CD4-positive, alpha-beta memory T cell (primary cell): ENCODE measurements at regions of chr7 and their contacts with region 1.

Region 1: DNA sequence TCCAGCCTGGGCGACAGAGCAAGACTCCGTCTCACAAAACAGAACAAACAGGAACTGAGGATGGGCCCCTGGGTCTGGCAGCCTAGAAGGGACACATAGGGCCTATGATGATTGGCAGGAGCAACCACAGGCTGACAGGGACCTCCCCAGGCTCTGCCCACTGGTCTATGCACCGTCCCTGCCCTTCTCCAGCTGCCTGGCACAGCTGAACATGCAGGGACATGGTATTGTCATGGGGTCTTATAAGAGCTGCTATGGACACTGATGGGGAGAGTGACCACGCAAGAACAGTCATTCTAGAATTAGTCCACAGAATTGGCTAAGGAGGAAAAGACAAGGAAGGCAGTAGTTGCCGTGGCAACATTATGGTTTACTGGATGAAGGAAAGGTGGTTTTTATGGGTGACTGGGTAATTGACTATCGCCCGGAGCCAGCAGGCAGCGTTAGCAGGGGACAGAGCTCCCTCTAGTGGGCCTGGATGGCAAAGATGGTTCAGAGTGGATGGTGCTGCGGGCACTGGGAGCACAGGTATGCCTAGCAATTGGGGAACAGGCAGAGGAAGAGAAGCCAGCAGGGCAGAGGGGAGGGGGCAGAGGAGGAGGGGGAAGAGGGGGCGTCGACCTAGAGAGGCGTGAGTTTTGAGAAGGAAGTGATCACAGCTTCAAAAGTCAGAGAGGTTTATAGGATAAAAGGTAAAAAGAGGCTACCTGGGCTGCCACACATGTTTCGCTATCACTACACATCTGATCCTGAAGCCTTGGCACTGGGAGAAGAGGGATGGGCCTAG is 7.8 kb upstream of the TRIM56 start:
- DNase-seq: peak; percentile 75 to 81 (median 78)
- H3K4me3 ChIP-seq: no peak overlapping the region
- H3K4me3 Mint-ChIP-seq: peak overlapping the region in 2 of 8 donors; percentile 8 to 41
- H3K27ac ChIP-seq: no peak overlapping the region
- H3K27ac Mint-ChIP-seq: peak overlapping the region in 1 of 7 donors; percentile 70
- H3K4me1 ChIP-seq: peaks cover 7% of the 10 kb centered on the region
- H3K4me1 Mint-ChIP-seq: peaks cover 0 to 5% (median 4%) of the 10 kb centered on the region in 4 donors
- H3K27me3 ChIP-seq: no peaks in the 10 kb centered on the region
- H3K27me3 Mint-ChIP-seq: peaks cover 5 to 9% of the 10 kb centered on the region in 2 donors

Region 2: DNA sequence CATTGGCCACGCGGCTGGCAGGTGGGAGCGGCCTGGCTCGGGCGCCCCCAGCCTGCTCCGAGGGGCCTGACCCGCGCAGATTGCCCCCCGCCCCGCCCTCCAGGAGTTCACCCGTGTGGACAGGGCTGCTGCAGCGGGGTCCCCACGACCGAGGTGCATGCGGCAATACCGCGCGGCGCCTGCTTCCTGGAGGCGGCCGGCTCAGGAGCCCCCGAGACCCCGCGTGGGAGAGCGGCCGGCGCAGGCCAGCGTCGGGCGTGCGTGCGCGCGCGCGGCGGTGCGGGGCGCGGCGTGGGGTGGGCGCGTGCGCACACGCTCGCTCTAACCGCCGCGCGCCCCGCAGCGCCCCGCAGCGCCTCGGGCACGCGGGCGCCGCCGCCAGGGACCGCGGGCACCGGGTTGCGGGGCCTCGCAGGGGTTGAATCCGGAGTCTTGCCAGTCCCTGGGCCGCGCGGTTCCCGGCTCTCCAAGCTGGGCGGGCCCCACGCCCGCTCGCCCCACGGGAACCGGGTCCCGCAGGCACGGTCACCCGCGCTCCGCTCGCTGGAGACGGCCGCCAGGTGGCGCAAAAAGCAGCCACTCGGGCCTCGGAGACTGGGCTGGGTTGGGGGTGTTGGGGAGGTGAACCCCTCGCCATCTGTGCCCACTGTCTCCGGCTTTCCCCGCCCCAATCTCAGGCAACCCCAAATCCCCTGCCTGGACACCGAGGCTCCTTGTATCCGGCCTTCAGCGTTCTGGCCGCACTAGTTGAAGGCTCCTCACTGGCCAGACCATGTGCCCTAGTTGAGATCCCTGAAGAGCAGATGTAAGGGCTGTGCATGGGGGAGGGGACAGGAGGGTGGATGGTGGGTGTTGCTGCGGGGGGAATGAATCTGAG is 180.5 kb before region 1 on chr7:
- CTCF ChIA-PET with region 1: interaction called, 11 read pairs
- POLR2A ChIA-PET with region 1: no interaction called
- intact Hi-C with region 1: loop called (anchors 1 kb)
- DNase-seq: peak; percentile 23 to 68 (median 47)
- H3K4me3 ChIP-seq: peak overlapping the region in 1 of 2 donors; percentile 32
- H3K4me3 Mint-ChIP-seq: peak overlapping the region; percentile 10 to 78 (median 68)
- H3K27ac ChIP-seq: no peak overlapping the region
- H3K27ac Mint-ChIP-seq: peak overlapping the region in 1 of 7 donors; percentile 74
- H3K4me1 ChIP-seq: peaks cover 19% of the 10 kb centered on the region
- H3K4me1 Mint-ChIP-seq: peaks cover 7 to 26% (median 8%) of the 10 kb centered on the region in 4 donors
- H3K27me3 ChIP-seq: peaks cover 15% of the 10 kb centered on the region
- H3K27me3 Mint-ChIP-seq: peaks cover 31 to 32% of the 10 kb centered on the region in 2 donors

Region 3: DNA sequence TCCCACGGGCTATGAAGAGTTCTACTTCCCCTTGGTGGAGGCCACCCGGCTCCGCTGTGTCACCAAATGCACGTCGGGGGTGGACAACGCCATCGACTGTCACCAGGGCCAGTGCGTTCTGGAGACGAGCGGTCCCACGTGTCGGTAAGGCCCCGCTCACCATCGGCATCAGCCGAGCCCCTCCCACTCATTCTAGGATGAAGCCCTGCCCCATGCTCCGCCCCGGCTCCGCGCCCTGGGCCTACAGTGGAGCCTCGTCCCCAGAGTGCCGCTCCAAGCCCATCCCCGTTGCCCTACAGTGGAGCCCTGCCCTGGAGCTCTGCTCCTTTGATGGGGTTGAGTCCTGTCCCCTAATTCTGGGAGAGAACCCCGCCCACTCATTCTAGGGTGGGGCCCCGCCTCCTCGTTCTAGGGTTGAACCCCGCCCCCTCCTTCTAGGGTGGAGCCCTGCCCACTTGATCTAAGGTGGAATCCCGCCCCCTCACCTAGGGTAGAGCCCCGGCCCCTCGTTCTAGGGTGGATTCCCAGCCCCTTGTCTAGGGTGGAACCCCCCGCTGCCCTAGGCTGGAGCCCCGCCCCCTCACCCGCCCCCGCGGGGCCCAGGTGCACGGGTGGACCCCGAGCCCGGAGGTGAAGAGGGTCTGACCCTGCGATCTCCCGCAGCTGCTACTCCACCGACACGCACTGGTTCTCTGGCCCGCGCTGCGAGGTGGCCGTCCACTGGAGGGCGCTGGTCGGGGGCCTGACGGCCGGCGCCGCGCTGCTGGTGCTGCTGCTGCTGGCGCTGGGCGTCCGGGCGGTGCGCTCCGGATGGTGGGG is 111.6 kb before region 1 on chr7:
- CTCF ChIA-PET with region 1: interaction called, 3 read pairs
- POLR2A ChIA-PET with region 1: no interaction called
- intact Hi-C with region 1: loop called (anchors 5 kb)
- DNase-seq: peak; percentile 53 to 77 (median 64)
- H3K4me3 ChIP-seq: peak overlapping the region; percentile 36 to 47
- H3K4me3 Mint-ChIP-seq: peak overlapping the region; percentile 80 to 89 (median 84)
- H3K27ac ChIP-seq: no peak overlapping the region
- H3K27ac Mint-ChIP-seq: peak overlapping the region in 1 of 7 donors; percentile 39
- H3K4me1 ChIP-seq: peaks cover 21% of the 10 kb centered on the region
- H3K4me1 Mint-ChIP-seq: peaks cover 12 to 36% (median 19%) of the 10 kb centered on the region in 4 donors
- H3K27me3 ChIP-seq: peaks cover 38% of the 10 kb centered on the region
- H3K27me3 Mint-ChIP-seq: peaks cover 39 to 53% of the 10 kb centered on the region in 2 donors